ENCODE measurements at regions of chr9 and their contacts with region 1.

Region 1: GRCh38 chr9:19184144-19184917 is 46.2 kb upstream of the DENND4C start:
- DNase-seq: peak; percentile 12 to 65 (median 26)
- ATAC-seq: peak; percentile 88
- H3K4me3 ChIP-seq: no peak overlapping the region
- H3K27ac ChIP-seq: no peak overlapping the region
- H3K4me1 ChIP-seq: peaks cover 0 to 4% of the 10 kb centered on the region in 2 experiments; a peak in 1 of 5 replicates
- H3K27me3 ChIP-seq: no peaks in the 10 kb centered on the region
- CTCF ChIP-seq: no peak
- EP300 ChIP-seq: no peak
- POLR2A ChIP-seq: no peak
- RAD21 ChIP-seq: no peak

Region 2: DNA sequence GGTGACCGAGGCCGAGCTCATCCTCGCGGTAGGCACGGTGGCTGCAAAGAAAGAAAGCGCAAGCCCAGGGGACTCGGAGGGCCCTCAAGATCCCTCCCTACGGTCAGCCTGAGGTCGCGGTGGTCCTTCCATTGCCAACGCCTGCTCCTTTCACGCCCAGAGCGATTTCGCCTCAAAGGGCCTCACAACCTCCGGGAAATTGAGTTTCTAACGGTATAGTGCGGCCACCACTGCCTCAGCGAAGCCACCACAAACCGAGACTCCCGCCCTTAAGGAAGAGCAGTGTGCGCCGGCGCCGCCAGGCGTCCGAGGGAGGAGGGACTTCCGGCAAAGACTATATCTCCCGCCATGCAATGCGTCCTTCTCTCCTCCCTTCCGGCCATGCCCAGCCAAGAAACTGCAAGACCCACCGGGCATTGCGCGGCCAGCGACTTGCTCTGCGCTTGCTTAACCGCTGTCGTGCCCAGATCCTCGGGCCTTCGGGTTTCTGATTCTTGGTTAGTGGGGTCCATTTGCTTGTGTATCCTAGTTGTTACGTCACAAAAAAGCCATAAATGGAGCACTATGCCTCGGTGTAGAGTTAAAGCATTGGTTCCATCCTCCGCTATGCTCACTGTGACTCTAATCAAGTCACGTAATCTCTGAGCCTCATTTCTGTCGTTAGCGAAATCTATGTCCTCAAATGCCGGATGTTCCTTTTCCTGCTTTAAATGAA is 81.5 kb before region 1 on chr9 and contains the start of gene HAUS6:
- CTCF ChIA-PET with region 1: no interaction called
- POLR2A ChIA-PET with region 1: no interaction called
- in situ Hi-C with region 1: loop called (anchors 5 kb)
- intact Hi-C with region 1: no loop called
- DNase-seq: peak; percentile 80 to 95 (median 84)
- ATAC-seq: peak; percentile 96
- H3K4me3 ChIP-seq: peak within 1 kb of the TSS; percentile 89
- H3K27ac ChIP-seq: peak within 1 kb of the TSS; percentile 82
- H3K4me1 ChIP-seq: peaks cover 4 to 6% of the 10 kb centered on the region in 2 experiments; a peak in 3 of 5 replicates
- H3K27me3 ChIP-seq: no peaks in the 10 kb centered on the region
- CTCF ChIP-seq: peak; percentile 20 to 33 (median 24); a peak in 2 of 6 replicates
- EP300 ChIP-seq: no peak
- POLR2A ChIP-seq: peak; percentile 86
- RAD21 ChIP-seq: no peak
- polyA plus RNA-seq, gene HAUS6: 10.2 to 17.6 TPM

Region 3: DNA sequence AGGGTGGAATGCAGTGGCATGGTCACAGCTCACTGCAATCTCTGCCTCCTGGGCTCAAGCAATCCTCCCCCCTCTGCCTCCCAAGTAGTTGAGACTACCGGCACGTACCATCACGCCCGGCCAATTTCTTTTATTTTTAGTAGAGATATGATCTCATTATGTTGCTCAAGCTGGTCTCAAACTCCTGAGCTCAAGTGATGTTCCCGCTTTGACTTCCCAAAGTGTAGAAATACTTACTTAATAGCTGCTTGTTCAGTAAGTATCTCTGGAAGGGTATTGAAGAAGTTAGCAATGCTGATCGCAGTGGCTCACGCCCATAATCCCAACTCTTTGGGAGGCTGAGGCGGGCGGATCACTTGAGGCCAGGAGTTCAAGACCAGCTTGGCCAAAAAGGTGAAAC is 21.4 kb before region 1 on chr9:
- CTCF ChIA-PET with region 1: no interaction called
- POLR2A ChIA-PET with region 1: no interaction called
- in situ Hi-C with region 1: no loop called
- intact Hi-C with region 1: no loop called
- DNase-seq: no peak
- ATAC-seq: no peak
- H3K4me3 ChIP-seq: no peak overlapping the region
- H3K27ac ChIP-seq: peak overlapping the region; percentile 79; the same call in 2 of the 3 replicates
- H3K4me1 ChIP-seq: peaks cover 12 to 13% of the 10 kb centered on the region in 2 experiments; a peak in 4 of 5 replicates
- H3K27me3 ChIP-seq: no peaks in the 10 kb centered on the region
- CTCF ChIP-seq: no peak
- EP300 ChIP-seq: no peak
- POLR2A ChIP-seq: no peak
- RAD21 ChIP-seq: no peak